ENCODE measurements at regions of chr10 and their contacts with region 1.

Region 1: GRCh38 chr10:13776861-13777311 is 190.1 kb downstream of the PRPF18 start:
- DNase-seq: no peak
- H3K4me3 Mint-ChIP-seq: no peak overlapping the region
- H3K27ac Mint-ChIP-seq: no peak overlapping the region
- H3K4me1 Mint-ChIP-seq: no peaks in the 10 kb centered on the region
- H3K27me3 Mint-ChIP-seq: peaks cover 17% of the 10 kb centered on the region

Region 2: GRCh38 chr10:13659897-13660550 is 116.9 kb before region 1 on chr10:
- intact Hi-C with region 1: loop called (anchors 1 kb)
- DNase-seq: peak; percentile 89
- H3K4me3 Mint-ChIP-seq: no peak overlapping the region
- H3K27ac Mint-ChIP-seq: no peak overlapping the region
- H3K4me1 Mint-ChIP-seq: peaks cover 7% of the 10 kb centered on the region
- H3K27me3 Mint-ChIP-seq: no peaks in the 10 kb centered on the region

Region 3: GRCh38 chr10:13787015-13787421 is 10.1 kb after region 1 on chr10:
- intact Hi-C with region 1: no loop called
- DNase-seq: peak; percentile 94
- H3K4me3 Mint-ChIP-seq: peak overlapping the region; percentile 71
- H3K27ac Mint-ChIP-seq: peak overlapping the region; percentile 91
- H3K4me1 Mint-ChIP-seq: peaks cover 29% of the 10 kb centered on the region
- H3K27me3 Mint-ChIP-seq: no peaks in the 10 kb centered on the region

Region 4: DNA sequence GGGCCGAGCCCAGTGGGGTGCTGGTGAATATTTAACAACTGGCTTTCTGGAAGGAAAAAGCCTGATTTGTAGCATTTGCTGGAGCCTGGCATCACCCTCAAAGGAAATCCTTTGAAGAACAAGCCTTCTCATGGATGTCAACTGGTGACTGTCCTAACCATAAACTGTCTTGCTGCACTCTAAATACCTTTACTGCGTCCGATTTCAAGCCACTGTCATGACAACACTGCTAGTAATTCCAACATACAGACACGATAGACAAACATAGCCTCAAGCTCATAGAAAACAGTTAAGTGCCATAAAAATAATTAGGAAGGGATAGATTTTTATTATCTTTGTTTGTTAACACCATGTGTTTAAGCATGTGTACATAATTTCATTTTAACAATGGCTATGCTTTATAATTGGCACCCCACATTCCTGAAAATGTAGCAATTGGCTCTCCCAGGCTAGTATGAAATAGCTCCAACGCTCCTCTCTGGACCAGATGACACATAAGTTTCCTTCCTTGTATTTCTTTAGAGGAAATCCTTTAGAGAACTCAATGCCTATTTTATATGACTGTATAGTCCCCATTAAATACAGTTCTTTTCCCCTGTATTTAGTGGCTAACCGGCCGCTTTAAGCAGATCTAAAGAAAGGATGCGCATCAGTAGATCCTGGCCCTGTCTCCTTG is 83.2 kb after region 1 on chr10:
- intact Hi-C with region 1: no loop called
- DNase-seq: no peak
- H3K4me3 Mint-ChIP-seq: no peak overlapping the region
- H3K27ac Mint-ChIP-seq: no peak overlapping the region
- H3K4me1 Mint-ChIP-seq: no peaks in the 10 kb centered on the region
- H3K27me3 Mint-ChIP-seq: peaks cover 13% of the 10 kb centered on the region

Measured in activated CD4-positive, alpha-beta T cell treated with anti-CD3 and anti-CD28 coated beads, Interleukin-2, amount 10 ng/mL, durations not matched to agents 24 days and 14 days (primary cell).